Right ventricle myocardium inferior (tissue), 1 donor: ENCODE measurements at regions of chr1 and their contacts with region 1.

Region 1: DNA sequence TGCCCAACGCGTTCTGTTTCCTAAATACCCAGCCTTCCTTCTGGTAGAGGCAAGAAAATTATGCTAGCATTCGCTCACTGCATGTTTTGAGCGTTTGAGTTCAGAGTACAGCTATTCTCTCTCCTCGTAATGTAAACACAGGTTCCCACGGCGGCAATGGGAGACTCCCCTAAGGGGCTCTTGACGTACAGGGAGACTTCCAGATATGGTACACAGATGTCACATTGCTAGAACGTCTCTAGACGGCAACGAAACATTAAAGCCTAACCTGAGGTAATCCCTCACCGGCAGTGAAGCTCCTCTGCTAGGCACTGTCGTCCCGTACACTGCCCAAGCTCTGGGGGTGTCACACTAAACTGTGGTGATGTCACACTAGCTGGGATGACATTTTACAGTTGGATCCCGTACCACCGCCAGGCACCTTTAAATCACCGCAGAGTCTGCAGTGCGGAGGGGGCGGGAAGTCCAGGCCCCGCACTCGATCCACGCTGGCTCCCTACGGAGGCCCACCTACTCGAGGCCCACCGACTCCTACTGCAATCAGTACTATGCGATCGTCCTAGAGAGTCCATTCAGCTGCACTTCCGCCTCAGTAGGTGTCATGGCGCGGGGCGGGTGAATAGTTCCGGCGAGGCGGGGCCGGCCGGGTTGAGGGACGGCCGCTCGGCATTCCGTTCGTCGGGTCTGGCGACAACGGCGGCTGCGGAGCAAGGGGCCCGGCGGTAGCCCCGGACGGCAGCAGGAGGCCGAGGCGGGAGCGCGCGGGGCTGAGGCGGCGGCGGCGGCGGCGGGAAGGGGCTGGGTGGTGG is at the start of gene HIPK1:
- DNase-seq: peak; percentile 98
- ATAC-seq: peak; percentile 93
- total RNA-seq, gene HIPK1: 50.3 TPM

Region 2: DNA sequence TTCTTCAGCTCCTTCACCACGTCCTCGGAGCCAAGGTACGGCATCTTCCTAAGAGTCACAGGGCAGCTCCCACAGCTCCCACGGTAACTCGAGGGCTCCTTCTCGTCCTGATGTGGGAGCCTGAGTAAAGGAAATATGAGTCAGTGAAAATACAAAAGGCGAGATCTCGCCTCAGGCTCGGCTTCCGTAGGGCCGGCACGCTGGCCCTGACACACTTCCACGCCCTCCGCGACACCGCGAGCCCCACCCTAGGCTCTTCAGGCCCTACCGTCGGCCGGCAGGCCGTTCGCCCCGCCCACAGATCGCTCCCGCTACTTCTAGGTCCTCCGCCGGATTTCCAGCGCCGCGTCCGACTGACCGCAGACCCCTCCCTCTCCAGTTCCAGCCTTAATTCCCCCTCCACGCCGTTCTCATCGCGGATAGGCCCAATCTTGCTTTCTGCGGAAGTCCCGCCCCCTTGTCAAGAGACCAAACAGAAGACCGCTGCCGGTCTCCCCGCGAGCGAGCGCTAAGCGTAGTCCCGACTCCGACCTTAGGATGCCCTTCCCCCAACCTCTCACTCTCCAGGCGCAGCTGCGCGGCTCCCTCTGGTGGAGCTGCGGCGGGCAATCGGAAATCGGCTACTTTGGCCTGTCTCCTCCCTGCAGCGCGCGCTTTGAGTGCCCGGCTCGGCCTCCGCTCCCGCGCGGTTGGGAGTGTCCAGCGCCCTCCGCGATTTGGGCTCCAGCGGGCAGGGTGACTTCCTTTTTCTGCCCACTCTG is 24.3 kb before region 1 on chr1 and contains the starts of genes AP4B1 and DCLRE1B:
- intact Hi-C with region 1: loop called (anchors 1 kb)
- DNase-seq: peak; percentile 100
- ATAC-seq: peak; percentile 99
- total RNA-seq, gene AP4B1: 12.2 TPM
- total RNA-seq, gene DCLRE1B: 2.4 TPM

Region 3: DNA sequence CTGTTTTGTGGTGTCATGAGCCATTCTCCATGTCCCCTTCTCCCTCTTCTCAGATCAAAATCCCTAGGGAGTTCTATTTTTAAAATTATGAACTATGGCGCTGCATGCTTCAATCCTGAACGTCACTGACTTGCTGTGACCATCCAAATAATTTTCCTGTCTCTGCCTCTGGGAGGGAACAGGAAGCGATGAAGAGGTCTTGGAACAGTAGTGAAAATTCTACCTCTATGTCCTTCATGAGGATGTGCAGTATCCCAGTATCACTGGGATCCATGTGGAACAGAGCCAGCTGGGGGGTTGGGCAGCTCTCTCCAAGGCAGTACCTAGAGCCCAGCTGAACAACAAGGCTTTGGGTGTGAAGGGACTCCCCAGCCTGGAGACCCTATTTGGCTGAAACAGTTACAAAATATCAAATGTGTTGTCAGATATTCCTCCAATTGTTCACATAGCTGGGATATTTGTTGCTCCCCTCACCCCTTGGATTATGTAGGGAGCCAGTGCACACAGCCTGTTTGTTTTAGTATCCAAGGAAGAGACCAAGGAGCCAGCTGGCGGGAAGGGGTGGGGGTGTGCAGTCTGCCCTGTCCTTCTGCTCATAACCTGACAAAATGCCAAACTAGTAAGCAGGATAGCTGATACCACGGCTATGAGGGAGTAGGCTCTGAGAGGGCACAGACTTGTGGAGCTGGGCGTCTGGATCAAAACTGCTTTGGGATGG is 16.4 kb before region 1 on chr1:
- intact Hi-C with region 1: loop called (anchors 2 kb)
- DNase-seq: no peak
- ATAC-seq: peak; percentile 91